Naive thymus-derived CD4-positive, alpha-beta T cell (primary cell): ENCODE measurements at regions of chr12 and their contacts with region 1.

Region 1: DNA sequence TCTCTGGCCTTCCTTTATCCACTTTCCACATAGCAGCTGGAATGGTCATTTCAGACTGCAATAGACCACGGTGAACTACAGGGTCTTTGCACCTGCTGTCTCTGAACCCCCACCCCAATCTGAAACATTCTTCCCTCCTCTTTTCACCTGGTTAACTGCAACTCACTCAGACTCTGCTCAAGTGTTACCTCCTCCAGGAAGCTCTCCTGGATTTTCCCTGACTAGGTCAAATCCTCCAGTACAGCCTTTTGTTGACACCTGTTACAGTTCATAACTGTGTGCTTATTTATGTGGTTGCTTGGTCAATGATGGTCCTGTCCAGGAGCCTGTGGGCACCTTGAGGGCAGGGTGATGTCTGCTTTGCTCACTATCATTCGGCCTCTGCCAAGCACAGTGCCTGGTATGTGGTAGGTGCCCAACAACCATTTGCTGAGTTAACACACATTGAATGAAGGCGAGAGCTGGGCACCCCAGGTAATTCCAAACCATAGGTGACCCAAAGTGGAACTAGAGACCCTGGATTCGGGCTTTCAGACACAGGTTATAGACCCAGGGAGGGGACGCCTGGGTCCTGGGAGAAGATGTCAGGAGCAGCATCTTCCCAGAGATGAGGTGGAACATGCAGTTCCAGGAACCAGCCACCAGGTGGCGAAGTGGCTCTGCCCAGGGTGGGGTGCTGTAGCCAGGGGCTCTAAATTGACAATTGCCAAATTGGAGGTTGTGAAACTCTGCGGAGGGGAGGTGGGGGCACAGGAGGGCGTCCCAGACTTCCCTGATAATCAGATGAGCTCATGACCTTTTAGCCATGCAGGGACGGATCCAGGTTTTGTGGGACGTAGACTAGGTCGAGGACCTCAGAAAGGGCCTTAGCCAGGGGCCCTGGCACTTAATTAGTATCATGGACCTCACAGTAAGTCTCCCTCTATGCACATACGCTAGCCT is 28.1 kb downstream of the TRPV4 start:
- DNase-seq: peak; percentile 44 to 73 (median 55)
- ATAC-seq: peak; percentile 90
- H3K4me3 ChIP-seq: no peak overlapping the region
- H3K4me3 Mint-ChIP-seq: no peak overlapping the region
- H3K27ac ChIP-seq: no peak overlapping the region
- H3K27ac Mint-ChIP-seq: peak overlapping the region in 2 of 9 donors; percentile 58 to 74
- H3K4me1 ChIP-seq: no peaks in the 10 kb centered on the region
- H3K4me1 Mint-ChIP-seq: peaks cover 0 to 2% (median 0%) of the 10 kb centered on the region in 7 donors
- H3K27me3 ChIP-seq: no peaks in the 10 kb centered on the region
- H3K27me3 Mint-ChIP-seq: peaks cover 0 to 4% (median 0%) of the 10 kb centered on the region in 5 donors

Region 2: GRCh38 chr12:108414021-108414420 is 1391.1 kb before region 1 on chr12:
- CTCF ChIA-PET with region 1: no interaction called
- POLR2A ChIA-PET with region 1: no interaction called
- intact Hi-C with region 1: no loop called
- DNase-seq: no peak
- ATAC-seq: no peak
- H3K4me3 ChIP-seq: no peak overlapping the region
- H3K4me3 Mint-ChIP-seq: no peak overlapping the region
- H3K27ac ChIP-seq: no peak overlapping the region
- H3K27ac Mint-ChIP-seq: no peak overlapping the region
- H3K4me1 ChIP-seq: no peaks in the 10 kb centered on the region
- H3K4me1 Mint-ChIP-seq: no peaks in the 10 kb centered on the region
- H3K27me3 ChIP-seq: no peaks in the 10 kb centered on the region
- H3K27me3 Mint-ChIP-seq: peaks cover 0 to 35% (median 23%) of the 10 kb centered on the region in 5 donors

Region 3: GRCh38 chr12:108939594-108939993 is 865.5 kb before region 1 on chr12:
- CTCF ChIA-PET with region 1: no interaction called
- POLR2A ChIA-PET with region 1: no interaction called
- intact Hi-C with region 1: no loop called
- DNase-seq: peak in 4 of 9 donors; percentile 5 to 20 (median 14)
- ATAC-seq: peak; percentile 72
- H3K4me3 ChIP-seq: no peak overlapping the region
- H3K4me3 Mint-ChIP-seq: no peak overlapping the region
- H3K27ac ChIP-seq: no peak overlapping the region
- H3K27ac Mint-ChIP-seq: no peak overlapping the region
- H3K4me1 ChIP-seq: no peaks in the 10 kb centered on the region
- H3K4me1 Mint-ChIP-seq: peaks cover 0 to 8% (median 0%) of the 10 kb centered on the region in 7 donors
- H3K27me3 ChIP-seq: no peaks in the 10 kb centered on the region
- H3K27me3 Mint-ChIP-seq: peaks cover 0 to 8% (median 7%) of the 10 kb centered on the region in 5 donors

Region 4: DNA sequence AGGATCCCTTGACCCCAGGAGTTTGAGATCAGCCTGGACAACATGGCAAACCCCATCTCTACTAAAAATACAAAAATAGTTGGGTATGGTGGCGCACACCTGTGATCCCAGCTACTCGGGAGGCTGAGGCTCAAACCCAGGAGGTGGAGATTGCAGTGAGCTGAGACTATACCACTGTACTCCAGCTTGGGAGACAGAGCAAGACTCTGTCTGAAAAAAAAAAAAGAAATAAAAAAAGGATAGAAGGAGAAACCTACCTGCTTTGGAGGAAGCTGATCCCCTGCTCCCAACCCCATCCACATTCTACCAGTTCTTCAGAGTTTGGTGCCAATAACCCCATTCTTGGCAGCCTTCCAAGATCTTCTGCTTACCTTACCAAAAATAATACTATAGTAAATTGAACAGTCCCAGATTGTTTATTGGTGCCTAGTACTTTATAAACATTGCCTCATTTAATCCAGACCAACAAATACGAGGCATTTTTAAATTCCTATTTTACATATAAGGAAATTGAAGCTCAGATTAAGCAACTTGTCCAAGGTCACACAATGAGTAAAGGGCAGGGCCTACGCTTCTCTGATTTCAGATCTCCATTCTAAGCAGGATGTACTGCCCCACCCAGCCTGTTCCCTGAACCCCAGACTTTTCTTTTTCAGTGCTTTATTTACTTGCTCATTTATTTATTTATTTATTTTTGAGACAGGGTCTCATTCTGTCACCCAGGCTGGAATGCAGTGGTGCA is 124.7 kb before region 1 on chr12:
- CTCF ChIA-PET with region 1: no interaction called
- POLR2A ChIA-PET with region 1: no interaction called
- intact Hi-C with region 1: no loop called
- DNase-seq: no peak
- ATAC-seq: no peak
- H3K4me3 ChIP-seq: no peak overlapping the region
- H3K4me3 Mint-ChIP-seq: no peak overlapping the region
- H3K27ac ChIP-seq: no peak overlapping the region
- H3K27ac Mint-ChIP-seq: no peak overlapping the region
- H3K4me1 ChIP-seq: no peaks in the 10 kb centered on the region
- H3K4me1 Mint-ChIP-seq: no peaks in the 10 kb centered on the region
- H3K27me3 ChIP-seq: no peaks in the 10 kb centered on the region
- H3K27me3 Mint-ChIP-seq: peaks cover 0 to 34% (median 6%) of the 10 kb centered on the region in 5 donors

Region 5: DNA sequence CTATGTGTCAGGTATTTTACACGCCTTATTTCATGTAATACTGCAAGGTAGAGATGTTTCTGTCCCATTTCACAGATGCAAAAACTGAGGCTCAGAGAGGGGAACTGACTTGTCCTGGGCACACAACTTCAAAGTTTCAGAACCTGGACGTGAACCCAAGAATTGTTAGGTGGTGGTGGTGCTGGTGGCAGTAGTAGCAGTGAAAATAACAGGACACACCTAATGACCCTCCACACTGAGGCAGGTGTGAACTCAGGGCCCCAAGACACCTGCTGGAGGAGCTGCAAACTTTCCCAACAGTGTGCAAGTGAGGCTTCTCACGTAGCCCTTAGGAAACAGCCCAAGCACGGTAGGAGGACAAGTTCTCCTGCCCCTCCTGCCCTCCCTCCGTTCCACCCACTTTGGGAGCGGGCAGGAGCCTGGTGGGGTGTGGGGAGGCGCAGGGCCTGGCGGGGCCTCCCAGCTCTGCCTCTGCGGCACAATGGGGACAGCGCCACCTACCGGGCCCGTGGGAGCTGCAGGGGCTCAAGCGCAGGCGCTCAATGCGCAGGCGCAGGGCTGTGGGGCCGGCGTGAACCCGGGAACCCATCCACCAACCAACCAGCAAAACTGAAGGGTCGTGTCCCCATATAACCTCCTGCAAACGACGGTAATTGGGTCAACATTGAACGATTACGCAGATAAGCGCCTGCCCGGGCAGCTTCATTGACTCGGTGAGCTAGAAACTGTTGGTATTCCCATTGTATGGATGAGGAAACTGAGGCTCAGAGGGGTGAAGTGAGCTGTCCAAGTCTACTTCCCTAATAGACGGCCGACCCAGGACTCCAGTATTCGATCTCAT is 40.1 kb after region 1 on chr12:
- CTCF ChIA-PET with region 1: interaction called, 14 read pairs
- POLR2A ChIA-PET with region 1: no interaction called
- intact Hi-C with region 1: loop called (anchors 1 kb)
- DNase-seq: peak; percentile 65 to 97 (median 80)
- ATAC-seq: peak; percentile 97
- H3K4me3 ChIP-seq: no peak overlapping the region
- H3K4me3 Mint-ChIP-seq: peak overlapping the region in 5 of 10 donors; percentile 32 to 70 (median 51)
- H3K27ac ChIP-seq: no peak overlapping the region
- H3K27ac Mint-ChIP-seq: no peak overlapping the region
- H3K4me1 ChIP-seq: no peaks in the 10 kb centered on the region
- H3K4me1 Mint-ChIP-seq: peaks cover 0 to 10% (median 0%) of the 10 kb centered on the region in 7 donors
- H3K27me3 ChIP-seq: no peaks in the 10 kb centered on the region
- H3K27me3 Mint-ChIP-seq: no peaks in the 10 kb centered on the region